ENCODE measurements at regions of chr9 and their contacts with region 1.

Region 1: GRCh38 chr9:36102742-36103495 is 33.6 kb upstream of the GLIPR2 start:
- DNase-seq: peak; percentile 84
- H3K4me3 Mint-ChIP-seq: no peak overlapping the region
- H3K27ac Mint-ChIP-seq: no peak overlapping the region
- H3K4me1 Mint-ChIP-seq: no peaks in the 10 kb centered on the region
- H3K27me3 Mint-ChIP-seq: no peaks in the 10 kb centered on the region
- CTCF ChIP-seq: peak; percentile 66

Region 2: DNA sequence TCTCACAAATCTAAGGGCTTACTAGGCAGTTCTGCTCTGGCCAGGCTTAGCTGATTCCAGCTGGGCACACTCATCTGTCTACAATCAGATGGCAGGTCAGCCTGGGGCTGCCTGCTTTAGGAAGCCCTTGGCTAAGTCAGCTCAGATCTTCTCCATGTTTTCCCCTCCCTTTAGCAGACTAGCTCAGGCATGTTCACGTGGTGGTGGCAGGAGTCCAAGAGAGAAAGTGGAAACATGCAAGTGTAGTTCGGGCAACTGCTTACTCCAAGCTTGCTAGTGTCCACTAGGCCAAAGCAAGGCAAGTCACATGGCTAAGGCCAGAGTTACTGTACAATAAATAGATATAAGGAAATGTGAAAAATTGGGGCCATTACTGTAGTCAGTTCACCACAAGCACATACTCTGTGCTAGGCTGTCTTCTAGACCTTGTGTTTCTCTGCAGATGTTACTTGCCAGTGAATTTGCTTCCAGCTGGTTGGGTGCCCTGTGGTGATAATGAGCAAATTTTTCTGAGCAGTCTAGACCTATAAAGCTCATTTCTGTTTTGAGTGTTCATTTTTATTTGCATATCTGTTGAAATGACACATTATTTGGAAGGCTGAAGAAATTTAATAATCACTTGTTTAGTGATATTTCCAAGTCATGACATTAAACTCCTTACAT is 27.9 kb before region 1 on chr9:
- CTCF ChIA-PET with region 1: interaction called, 13 read pairs
- POLR2A ChIA-PET with region 1: no interaction called
- intact Hi-C with region 1: no loop called
- DNase-seq: peak; percentile 89
- H3K4me3 Mint-ChIP-seq: no peak overlapping the region
- H3K27ac Mint-ChIP-seq: peak overlapping the region; percentile 33
- H3K4me1 Mint-ChIP-seq: peaks cover 19% of the 10 kb centered on the region
- H3K27me3 Mint-ChIP-seq: no peaks in the 10 kb centered on the region
- CTCF ChIP-seq: no peak

Region 3: GRCh38 chr9:36092509-36093215 is 10.3 kb before region 1 on chr9:
- CTCF ChIA-PET with region 1: interaction called, 18 read pairs
- POLR2A ChIA-PET with region 1: interaction called, 8 read pairs
- intact Hi-C with region 1: no loop called
- DNase-seq: no peak
- H3K4me3 Mint-ChIP-seq: no peak overlapping the region
- H3K27ac Mint-ChIP-seq: no peak overlapping the region
- H3K4me1 Mint-ChIP-seq: no peaks in the 10 kb centered on the region
- H3K27me3 Mint-ChIP-seq: no peaks in the 10 kb centered on the region
- CTCF ChIP-seq: no peak

Region 4: DNA sequence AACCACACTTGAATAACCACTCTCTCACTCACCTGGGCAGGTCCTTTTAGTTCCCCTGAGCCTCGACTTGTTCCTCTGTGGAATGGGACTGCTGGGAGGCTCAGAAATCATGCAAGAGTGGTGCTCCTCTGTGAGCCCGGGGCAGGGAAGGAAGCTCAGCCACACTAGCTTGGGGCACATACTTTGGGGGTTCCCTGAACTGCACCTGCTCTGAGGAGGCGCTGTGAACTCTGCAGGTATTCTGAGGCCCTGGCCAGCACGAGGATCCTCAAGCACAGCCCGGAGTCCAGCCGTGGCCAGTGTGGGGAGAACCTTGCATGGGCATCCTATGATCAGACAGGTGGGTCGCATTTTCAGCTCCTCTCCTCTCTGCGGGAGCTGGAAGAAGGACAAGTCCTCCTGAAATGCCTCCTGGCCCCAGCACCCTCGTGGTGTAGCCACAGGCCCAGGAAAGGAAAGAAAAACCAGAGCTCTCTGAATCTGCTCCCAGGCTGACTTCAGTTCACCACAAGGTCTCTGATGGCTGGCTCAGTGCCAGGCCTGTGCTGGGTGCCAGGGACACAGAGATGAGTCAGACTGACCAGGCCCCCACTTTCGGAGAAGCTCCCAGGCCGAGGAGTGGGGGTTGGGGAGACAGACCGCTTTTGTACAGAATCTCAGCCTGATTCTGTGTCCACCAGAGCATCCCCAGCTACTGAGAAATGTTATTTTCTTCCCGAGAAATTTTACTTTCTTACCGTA is 45.6 kb after region 1 on chr9:
- CTCF ChIA-PET with region 1: interaction called, 11 read pairs
- POLR2A ChIA-PET with region 1: no interaction called
- intact Hi-C with region 1: no loop called
- DNase-seq: peak; percentile 98
- H3K4me3 Mint-ChIP-seq: no peak overlapping the region
- H3K27ac Mint-ChIP-seq: no peak overlapping the region
- H3K4me1 Mint-ChIP-seq: no peaks in the 10 kb centered on the region
- H3K27me3 Mint-ChIP-seq: peaks cover 23% of the 10 kb centered on the region
- CTCF ChIP-seq: no peak

Region 5: DNA sequence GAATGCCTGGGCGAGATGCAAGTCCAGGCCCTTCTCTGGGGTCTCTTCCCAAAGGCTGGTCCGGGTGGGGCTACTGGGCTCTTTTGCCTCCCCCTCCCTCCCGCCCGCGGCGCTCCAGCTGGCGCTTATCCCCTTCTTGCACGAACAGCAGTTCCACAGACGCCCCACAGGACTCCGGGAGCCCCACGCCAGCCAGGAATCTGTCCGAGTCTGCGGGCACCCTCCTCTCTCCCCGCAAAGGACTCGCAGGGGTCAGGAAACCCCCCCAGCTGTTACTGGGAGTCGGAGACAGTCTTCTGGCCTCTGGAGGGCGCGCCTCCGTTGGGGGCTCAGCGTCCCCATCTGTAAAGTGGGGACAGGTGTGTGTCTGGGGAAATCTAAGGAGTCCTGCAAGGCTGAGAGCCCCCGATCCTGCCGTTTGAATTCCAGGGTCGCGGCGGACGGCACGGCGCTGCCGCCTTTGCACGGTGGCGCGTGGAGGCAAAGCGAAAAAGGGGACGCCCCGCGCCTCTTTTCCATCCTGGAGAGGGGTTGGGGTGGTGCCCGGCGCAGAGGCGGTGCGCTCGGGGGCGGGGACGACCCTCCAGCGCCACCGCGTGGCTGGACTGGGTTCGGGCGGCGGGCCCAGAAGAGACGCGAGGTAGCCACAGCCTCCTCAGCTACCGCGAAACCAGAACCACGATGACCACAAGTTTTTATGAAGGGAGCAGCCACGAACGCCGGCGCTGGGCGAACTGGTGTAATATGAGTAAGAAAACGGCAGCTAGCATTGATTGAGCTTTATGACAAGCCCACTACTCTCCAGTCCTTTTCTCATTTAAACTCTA is 63.4 kb after region 1 on chr9:
- CTCF ChIA-PET with region 1: interaction called, 106 read pairs
- POLR2A ChIA-PET with region 1: interaction called, 3 read pairs
- intact Hi-C with region 1: loop called (anchors 1 kb)
- DNase-seq: peak; percentile 72
- H3K4me3 Mint-ChIP-seq: peak overlapping the region; percentile 63
- H3K27ac Mint-ChIP-seq: no peak overlapping the region
- H3K4me1 Mint-ChIP-seq: peaks cover 3% of the 10 kb centered on the region
- H3K27me3 Mint-ChIP-seq: no peaks in the 10 kb centered on the region
- CTCF ChIP-seq: peak; percentile 90

Measured in MCF 10A (cell line).